ENCODE measurements at regions of chr17 and their contacts with region 1.

Region 1: GRCh38 chr17:37770631-37771518 is 26.0 kb upstream of the HNF1B start:
- DNase-seq: no peak
- H3K4me3 ChIP-seq: no peak overlapping the region
- H3K27me3 ChIP-seq: no peaks in the 10 kb centered on the region
- CTCF ChIP-seq: peak; percentile 87

Region 2: GRCh38 chr17:37592291-37592690 is 178.6 kb before region 1 on chr17:
- CTCF ChIA-PET with region 1: no interaction called
- POLR2A ChIA-PET with region 1: no interaction called
- DNase-seq: no peak
- H3K4me3 ChIP-seq: no peak overlapping the region
- H3K27me3 ChIP-seq: no peaks in the 10 kb centered on the region
- CTCF ChIP-seq: no peak

Region 3: DNA sequence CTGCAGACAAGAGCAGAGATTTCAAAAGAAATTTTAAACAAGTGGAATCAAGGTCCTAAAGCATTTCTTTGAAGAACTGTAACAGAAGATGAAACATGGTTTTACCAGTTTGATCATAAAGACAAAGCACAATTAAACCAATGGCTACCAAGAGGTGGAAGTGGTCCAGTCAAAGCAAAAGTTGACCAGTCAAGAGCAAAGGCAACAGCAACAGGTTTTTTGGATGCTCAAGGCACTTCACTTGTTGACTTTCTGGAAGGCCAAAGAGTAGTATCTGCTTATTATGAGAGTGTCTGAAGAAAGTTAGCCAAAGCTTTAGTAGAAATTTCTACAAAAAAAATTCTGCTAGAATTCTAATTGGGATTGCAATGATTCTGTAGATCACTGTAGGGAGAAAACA is 132.9 kb before region 1 on chr17:
- CTCF ChIA-PET with region 1: no interaction called
- POLR2A ChIA-PET with region 1: no interaction called
- DNase-seq: no peak
- H3K4me3 ChIP-seq: no peak overlapping the region
- H3K27me3 ChIP-seq: no peaks in the 10 kb centered on the region
- CTCF ChIP-seq: no peak

Region 4: DNA sequence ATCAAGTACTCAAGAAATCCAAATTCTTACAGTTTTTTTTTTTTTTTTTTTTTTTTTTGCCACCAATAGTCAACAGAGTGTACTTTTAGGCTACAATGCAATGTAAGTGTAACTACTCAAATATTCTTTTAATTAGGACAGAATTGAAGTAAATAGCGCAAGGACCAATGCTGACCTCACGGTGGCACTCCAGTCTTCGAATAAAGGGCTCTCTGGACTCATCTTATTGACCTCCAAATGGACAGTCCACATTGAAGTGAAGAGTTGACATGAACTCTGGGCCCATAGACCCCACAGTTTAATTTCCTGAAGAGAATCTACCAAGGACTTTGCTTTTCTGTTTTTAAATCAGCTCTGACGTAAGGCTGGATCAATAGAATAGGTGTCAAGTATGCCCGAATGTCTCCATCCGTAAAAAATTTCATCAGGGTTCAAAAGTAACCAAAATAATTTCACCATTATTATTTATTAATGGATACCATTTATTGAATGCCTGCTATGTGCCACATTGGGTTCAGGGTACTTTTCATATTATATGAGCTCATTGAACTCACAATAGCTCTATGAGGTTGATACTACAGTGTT is 120.4 kb before region 1 on chr17:
- CTCF ChIA-PET with region 1: interaction called, 115 read pairs
- POLR2A ChIA-PET with region 1: no interaction called
- DNase-seq: peak; percentile 9
- H3K4me3 ChIP-seq: no peak overlapping the region
- H3K27me3 ChIP-seq: no peaks in the 10 kb centered on the region
- CTCF ChIP-seq: peak; percentile 59

Region 5: GRCh38 chr17:37701496-37701898 is 69.4 kb before region 1 on chr17:
- CTCF ChIA-PET with region 1: interaction called, 26 read pairs
- POLR2A ChIA-PET with region 1: no interaction called
- DNase-seq: no peak
- H3K4me3 ChIP-seq: no peak overlapping the region
- H3K27me3 ChIP-seq: no peaks in the 10 kb centered on the region
- CTCF ChIP-seq: peak; percentile 54

Region 6: DNA sequence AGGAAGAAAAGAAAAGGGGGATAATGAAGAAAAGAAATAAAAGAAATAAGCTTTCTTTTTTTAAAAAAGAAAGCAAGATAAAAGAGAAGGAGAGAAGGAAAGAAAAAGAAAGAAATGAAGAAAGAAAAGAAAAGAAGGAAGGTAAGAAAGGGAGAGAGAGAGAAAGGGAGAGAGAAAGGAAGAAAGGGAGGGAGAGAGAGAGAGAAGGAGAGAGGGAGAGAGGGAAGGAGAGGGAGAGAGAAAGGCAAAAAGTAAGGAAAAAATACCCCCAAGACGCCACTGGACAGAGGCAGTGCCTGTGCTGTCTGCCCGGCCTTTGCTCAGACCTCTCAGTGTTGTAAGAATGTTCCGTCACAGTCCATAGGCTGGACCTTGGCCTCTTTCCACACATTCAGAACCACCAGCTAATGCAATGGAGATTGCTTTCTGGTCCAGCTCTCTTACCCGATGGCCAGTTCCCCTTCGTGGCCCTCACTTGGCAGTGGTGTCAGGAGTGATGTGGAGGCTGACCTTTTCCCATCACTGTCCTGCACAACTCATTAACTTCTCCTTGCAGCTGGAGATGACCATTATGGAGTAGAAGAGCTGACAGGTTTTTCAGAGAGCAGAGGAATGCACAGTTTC is 11.7 kb before region 1 on chr17:
- CTCF ChIA-PET with region 1: interaction called, 21 read pairs
- POLR2A ChIA-PET with region 1: no interaction called
- DNase-seq: no peak
- H3K4me3 ChIP-seq: no peak overlapping the region
- H3K27me3 ChIP-seq: no peaks in the 10 kb centered on the region; the same call in 1 of the 2 replicates
- CTCF ChIP-seq: no peak

Region 7: GRCh38 chr17:37818689-37819088 is 47.8 kb after region 1 on chr17:
- CTCF ChIA-PET with region 1: interaction called, 20 read pairs
- POLR2A ChIA-PET with region 1: no interaction called
- DNase-seq: no peak
- H3K4me3 ChIP-seq: no peak overlapping the region
- H3K27me3 ChIP-seq: no peaks in the 10 kb centered on the region
- CTCF ChIP-seq: no peak

Region 8: DNA sequence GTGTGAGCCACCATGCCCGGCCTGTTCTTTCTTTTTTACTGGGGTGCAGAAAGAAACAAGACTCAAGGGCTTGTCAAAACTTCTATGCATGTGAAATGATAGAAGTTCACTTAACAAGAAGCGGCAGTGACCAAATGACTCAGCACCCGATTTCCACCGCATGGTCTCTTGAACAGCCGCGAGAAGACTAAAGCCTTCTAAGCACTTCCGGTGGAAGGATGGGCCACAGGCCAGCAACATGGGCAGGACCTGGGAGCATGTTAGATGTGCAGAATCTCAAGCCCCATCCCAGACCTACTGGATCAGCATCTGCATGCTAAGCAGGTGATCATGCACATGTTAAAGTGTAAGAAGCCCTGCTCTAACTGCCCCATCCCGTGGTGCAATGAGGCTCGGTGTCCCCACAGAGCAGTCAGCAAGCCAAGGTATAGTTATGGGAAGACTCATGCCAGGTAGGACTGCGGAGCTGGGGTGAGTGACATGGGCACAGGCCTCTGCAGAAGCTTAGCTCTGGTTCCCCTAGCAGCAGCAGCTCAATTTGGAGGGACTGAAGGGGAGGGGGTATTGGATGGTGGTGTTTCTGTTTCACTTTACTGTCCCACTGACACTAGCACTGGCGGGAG is 62.5 kb after region 1 on chr17:
- CTCF ChIA-PET with region 1: no interaction called
- POLR2A ChIA-PET with region 1: no interaction called
- DNase-seq: no peak
- H3K4me3 ChIP-seq: no peak overlapping the region
- H3K27me3 ChIP-seq: peaks cover 2% of the 10 kb centered on the region; the same call in 1 of the 2 replicates
- CTCF ChIP-seq: no peak